CD4-positive, alpha-beta memory T cell (primary cell): ENCODE measurements at regions of chr5 and their contacts with region 1.

Region 1: GRCh38 chr5:14339468-14339867 is 196.3 kb downstream of the TRIO start:
- DNase-seq: no peak
- H3K4me3 ChIP-seq: no peak overlapping the region
- H3K4me3 Mint-ChIP-seq: no peak overlapping the region
- H3K27ac ChIP-seq: no peak overlapping the region
- H3K27ac Mint-ChIP-seq: no peak overlapping the region
- H3K4me1 ChIP-seq: no peaks in the 10 kb centered on the region
- H3K4me1 Mint-ChIP-seq: no peaks in the 10 kb centered on the region
- H3K27me3 ChIP-seq: no peaks in the 10 kb centered on the region
- H3K27me3 Mint-ChIP-seq: peaks cover 4 to 6% of the 10 kb centered on the region in 2 donors

Region 2: DNA sequence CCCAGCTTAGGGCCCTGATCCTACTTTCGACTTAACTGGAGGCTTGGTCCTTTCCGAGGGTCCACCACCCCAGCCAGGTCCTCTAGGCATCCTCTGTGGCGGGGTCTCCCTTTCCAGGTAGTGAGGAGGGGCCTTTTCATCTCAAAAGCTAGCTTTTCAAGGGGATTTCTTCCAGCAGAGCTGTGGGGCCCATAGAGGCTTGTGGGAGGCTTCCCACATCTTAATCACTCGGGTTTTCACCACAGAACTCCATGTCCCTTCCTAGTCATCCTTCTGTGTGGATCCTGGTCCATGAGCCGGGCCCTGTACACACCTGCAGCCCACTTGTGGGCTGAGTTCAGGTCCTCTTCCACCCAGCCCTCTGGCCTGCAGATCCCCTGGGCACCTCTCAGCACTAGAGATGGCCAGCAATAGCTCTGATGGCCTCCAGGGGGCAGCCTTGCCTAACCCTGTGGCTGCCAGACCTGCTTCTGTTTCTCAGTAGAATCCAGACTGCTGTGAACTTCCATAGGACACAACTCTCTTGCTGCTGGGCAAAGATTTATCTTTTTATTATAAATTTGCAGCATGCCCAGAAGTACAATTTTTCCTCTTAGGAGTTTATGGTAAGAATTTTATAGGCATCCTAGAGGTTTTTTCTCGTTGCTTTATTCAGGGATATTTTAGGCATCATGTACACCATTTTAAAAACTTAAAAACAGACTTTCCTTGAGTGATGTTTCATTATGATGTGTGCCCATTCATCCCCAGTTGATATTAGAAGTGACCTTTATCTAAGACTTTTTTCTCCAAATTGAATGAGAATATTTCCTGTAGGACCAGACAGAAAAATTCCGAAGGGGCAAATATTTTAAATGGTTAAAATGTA is 12.6 kb after region 1 on chr5:
- CTCF ChIA-PET with region 1: interaction called, 12 read pairs
- POLR2A ChIA-PET with region 1: no interaction called
- intact Hi-C with region 1: no loop called
- DNase-seq: peak; percentile 46 to 58 (median 57)
- H3K4me3 ChIP-seq: no peak overlapping the region
- H3K4me3 Mint-ChIP-seq: no peak overlapping the region
- H3K27ac ChIP-seq: no peak overlapping the region
- H3K27ac Mint-ChIP-seq: no peak overlapping the region
- H3K4me1 ChIP-seq: no peaks in the 10 kb centered on the region
- H3K4me1 Mint-ChIP-seq: no peaks in the 10 kb centered on the region
- H3K27me3 ChIP-seq: no peaks in the 10 kb centered on the region
- H3K27me3 Mint-ChIP-seq: peaks cover 2% of the 10 kb centered on the region in 2 donors